A673 (cell line): ENCODE measurements at regions of chrX and their contacts with region 1.

Region 1: GRCh38 chrX:34734383-34734782 is 77.3 kb upstream of the TMEM47 start:
- DNase-seq: no peak
- H3K4me3 ChIP-seq: no peak overlapping the region
- H3K27ac ChIP-seq: no peak overlapping the region
- H3K4me1 ChIP-seq: no peaks in the 10 kb centered on the region
- H3K27me3 ChIP-seq: no peaks in the 10 kb centered on the region
- CTCF ChIP-seq: no peak

Region 2: DNA sequence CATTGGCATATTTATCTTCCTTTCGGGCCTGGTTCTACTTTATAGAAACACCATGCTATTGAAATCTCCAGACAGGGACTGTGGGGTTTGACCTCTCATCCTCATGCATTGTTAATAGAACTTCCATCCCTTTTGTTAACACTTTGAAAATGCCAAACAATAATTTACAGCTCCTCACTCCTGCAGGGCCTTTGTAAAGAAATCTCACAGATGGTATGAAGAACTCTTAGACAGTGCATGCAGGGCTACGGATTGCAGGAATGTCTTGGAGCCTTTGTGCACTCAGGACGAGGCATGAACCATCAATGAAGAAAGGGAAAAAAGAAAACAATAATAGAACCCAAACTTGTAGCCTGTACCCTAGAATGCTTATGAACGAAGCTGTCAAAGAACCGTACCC is 15.5 kb after region 1 on chrX:
- CTCF ChIA-PET with region 1: interaction called, 10 read pairs
- POLR2A ChIA-PET with region 1: no interaction called
- intact Hi-C with region 1: no loop called
- DNase-seq: no peak
- H3K4me3 ChIP-seq: no peak overlapping the region
- H3K27ac ChIP-seq: no peak overlapping the region
- H3K4me1 ChIP-seq: no peaks in the 10 kb centered on the region
- H3K27me3 ChIP-seq: no peaks in the 10 kb centered on the region
- CTCF ChIP-seq: no peak